Right ventricle myocardium superior (tissue), 1 donor: ENCODE measurements at regions of chr7 and their contacts with region 1.

Region 1: DNA sequence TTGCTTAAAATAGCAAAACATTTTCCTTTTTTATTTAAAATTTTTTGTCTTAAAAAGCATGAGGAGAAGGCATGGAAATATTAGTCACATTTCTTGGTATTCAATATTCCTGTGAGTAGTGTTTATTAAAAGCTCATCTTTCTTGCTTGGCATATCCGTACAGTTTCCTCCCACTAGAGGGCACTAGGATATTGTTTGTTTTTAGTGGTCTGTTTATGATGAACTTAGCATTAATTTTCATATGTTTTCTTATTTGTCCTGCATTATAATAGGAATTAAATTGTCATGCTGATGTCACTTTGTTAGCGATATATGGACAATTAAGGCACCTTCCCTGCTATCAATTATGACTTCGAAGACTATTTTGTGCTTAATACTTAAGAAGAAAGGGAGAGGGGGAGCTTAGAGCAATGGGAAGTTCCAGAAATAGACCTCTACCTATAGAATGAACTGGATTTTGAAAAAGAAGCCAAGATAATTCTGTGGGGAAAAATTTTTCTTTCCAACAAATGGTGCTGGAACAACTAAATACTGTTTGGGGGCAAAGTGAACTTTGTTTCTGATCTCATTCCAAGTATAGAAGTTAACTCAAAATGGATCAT is 91.0 kb upstream of the STRIP2 start:
- DNase-seq: no peak
- ATAC-seq: peak; percentile 49

Region 2: GRCh38 chr7:129210256-129210988 is 132.8 kb before region 1 on chr7:
- intact Hi-C with region 1: no loop called
- DNase-seq: peak; percentile 90
- ATAC-seq: peak; percentile 97

Region 3: DNA sequence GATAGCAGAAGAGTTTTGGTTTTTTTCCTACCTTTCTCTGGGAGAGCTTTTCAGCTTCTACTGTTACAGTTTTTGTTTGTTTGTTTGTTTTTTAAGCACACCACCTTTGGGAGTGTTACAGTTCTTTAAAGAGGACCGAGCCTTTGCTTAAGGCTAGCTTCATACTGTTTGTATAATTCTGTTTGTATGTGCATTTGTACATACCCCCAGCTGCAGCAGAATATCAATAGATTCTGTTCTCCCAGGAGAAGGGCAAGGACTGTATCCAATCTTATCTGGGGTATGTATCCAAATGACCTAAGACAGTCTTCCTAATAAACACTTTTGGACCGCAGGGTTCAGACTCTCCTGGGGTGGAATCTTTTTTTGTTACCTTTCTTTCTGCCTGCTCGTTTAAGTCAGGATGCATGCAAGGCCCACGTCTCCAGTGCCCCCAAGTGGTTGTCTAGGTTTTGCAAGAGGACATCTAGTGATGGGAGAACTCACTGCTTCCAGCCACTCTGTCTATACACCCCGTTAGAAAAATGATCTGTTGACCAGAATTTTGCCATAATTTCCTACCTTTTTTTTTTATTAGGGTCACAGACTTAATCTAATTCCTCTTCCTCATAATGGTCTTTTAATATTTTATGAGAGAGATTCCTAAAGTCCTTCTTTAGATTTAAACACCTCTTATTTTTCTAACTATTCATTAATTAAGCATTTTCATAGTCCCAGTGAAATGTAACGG is 292.3 kb after region 1 on chr7:
- intact Hi-C with region 1: loop called (anchors 10 kb)
- DNase-seq: peak; percentile 60
- ATAC-seq: peak; percentile 85